Common myeloid progenitor, CD34-positive (primary cell): ENCODE measurements at regions of chr1 and their contacts with region 1.

Region 1: DNA sequence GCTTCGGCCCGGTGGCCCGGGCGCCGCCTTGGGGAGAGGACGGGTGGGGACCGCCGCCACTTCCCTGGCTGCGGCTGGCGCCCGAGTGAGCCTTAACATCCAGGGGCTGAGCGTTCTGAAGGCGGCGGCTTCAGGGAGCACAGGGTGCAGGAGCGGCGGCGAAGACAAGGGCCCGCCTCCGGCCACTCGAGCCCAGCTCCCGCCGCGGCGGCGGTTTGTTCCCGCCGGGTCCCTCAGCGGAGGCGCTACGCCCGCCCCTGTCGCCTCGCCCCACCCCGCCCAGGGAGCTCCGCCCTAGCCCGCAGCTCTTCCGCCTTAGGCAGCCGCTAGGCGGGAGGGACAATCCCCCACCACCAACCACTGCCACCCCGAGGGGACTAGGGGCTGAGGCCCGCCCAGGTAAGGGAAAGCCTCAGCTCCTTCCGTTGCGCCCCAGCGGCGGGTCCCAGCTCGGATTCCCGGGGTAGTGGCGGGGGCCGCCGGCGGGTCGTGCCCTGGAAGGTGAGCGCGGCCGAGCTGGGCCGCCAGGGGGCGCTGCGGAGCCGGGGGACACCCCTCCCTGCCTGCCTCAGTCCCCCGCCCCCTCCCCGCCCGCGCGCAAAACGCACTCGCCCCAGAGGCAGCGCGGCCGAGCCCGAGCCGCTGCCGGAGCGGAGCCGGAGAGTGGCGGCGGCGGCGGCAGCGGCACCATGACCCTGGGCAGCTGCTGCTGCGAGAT is at the start of gene FOXD2:
- DNase-seq: peak; percentile 83 to 91 (median 88)
- H3K4me3 ChIP-seq: peak within 1 kb of the TSS; percentile 40 to 78 (median 70)
- H3K27ac ChIP-seq: peak within 1 kb of the TSS in 1 of 2 experiments; percentile 34
- H3K4me1 ChIP-seq: peaks cover 0 to 49% (median 35%) of the 10 kb centered on the region in 4 experiments
- H3K27me3 ChIP-seq: peaks cover 11 to 91% (median 61%) of the 10 kb centered on the region in 5 experiments

Region 2: GRCh38 chr1:47378147-47378546 is 59.5 kb before region 1 on chr1:
- CTCF ChIA-PET with region 1: no interaction called
- POLR2A ChIA-PET with region 1: no interaction called
- DNase-seq: no peak
- H3K4me3 ChIP-seq: no peak overlapping the region
- H3K27ac ChIP-seq: no peak overlapping the region
- H3K4me1 ChIP-seq: no peaks in the 10 kb centered on the region
- H3K27me3 ChIP-seq: no peaks in the 10 kb centered on the region

Region 3: DNA sequence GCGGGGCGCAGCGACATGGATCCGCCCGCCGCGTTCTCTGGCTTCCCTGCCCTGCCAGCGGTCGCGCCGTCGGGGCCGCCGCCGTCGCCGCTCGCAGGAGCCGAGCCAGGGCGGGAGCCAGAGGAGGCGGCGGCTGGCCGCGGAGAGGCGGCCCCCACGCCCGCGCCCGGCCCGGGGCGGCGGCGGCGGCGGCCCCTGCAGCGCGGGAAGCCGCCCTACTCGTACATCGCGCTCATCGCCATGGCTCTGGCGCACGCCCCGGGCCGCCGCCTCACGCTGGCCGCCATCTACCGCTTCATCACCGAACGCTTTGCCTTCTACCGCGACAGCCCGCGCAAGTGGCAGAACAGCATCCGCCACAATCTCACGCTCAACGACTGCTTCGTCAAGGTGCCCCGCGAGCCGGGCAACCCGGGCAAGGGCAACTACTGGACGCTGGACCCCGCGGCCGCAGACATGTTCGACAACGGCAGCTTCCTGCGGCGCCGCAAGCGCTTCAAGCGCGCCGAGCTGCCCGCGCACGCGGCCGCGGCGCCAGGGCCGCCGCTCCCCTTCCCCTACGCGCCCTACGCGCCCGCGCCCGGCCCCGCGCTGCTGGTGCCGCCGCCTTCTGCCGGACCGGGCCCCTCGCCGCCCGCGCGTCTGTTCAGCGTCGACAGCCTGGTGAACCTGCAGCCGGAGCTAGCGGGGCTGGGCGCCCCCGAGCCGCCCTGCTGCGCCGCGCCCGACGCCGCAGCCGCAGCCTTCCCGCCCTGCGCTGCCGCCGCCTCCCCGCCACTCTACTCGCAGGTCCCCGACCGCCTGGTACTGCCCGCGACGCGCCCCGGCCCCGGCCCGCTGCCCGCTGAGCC is 21.1 kb before region 1 on chr1:
- CTCF ChIA-PET with region 1: interaction called, 53 read pairs
- POLR2A ChIA-PET with region 1: no interaction called
- DNase-seq: peak in 2 of 3 donors; percentile 40 to 55
- H3K4me3 ChIP-seq: peak overlapping the region in 2 of 7 experiments; percentile 54 to 64
- H3K27ac ChIP-seq: no peak overlapping the region
- H3K4me1 ChIP-seq: peaks cover 0 to 5% (median 2%) of the 10 kb centered on the region in 4 experiments
- H3K27me3 ChIP-seq: peaks cover 17 to 79% (median 31%) of the 10 kb centered on the region in 5 experiments

Region 4: GRCh38 chr1:47424336-47424982 is 13.1 kb before region 1 on chr1:
- CTCF ChIA-PET with region 1: interaction called, 53 read pairs
- POLR2A ChIA-PET with region 1: no interaction called
- DNase-seq: no peak
- H3K4me3 ChIP-seq: no peak overlapping the region
- H3K27ac ChIP-seq: no peak overlapping the region
- H3K4me1 ChIP-seq: no peaks in the 10 kb centered on the region
- H3K27me3 ChIP-seq: peaks cover 2 to 37% (median 22%) of the 10 kb centered on the region in 5 experiments

Region 5: GRCh38 chr1:47449822-47450552 is 12.4 kb after region 1 on chr1:
- CTCF ChIA-PET with region 1: interaction called, 63 read pairs
- POLR2A ChIA-PET with region 1: no interaction called
- DNase-seq: no peak
- H3K4me3 ChIP-seq: no peak overlapping the region
- H3K27ac ChIP-seq: no peak overlapping the region
- H3K4me1 ChIP-seq: peaks cover 0 to 7% (median 2%) of the 10 kb centered on the region in 4 experiments
- H3K27me3 ChIP-seq: peaks cover 22 to 87% (median 55%) of the 10 kb centered on the region in 5 experiments

Region 6: DNA sequence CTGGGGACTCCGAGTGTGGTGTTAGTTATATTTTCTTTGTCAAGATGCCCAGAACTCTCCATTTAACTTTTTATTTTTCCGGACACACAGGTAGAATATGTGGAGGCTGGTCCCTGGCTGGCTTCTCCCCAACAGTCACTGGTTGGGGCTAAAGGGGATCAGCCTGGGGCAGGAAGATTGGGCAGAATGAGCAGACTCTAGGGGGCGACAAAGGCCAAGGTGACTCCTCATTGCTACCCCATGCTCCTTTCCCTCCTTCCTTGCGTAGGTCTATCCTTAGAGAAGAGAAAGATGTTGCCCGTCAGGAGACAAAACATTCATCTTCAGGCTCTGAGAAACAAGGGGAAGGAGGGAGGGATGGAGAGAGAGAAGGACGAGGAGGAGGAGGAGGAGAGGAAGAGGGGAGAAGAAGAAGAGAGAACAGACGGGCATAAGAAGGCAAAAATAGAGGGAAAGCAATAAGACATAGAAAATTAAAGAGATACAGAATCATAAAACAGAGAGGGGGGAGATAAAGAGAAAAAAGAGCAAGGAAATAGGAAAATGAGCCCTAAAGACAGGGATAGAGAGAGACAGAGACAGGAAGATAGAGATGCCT is 90.2 kb after region 1 on chr1:
- CTCF ChIA-PET with region 1: interaction called, 10 read pairs
- POLR2A ChIA-PET with region 1: no interaction called
- DNase-seq: peak; percentile 54 to 71 (median 56)
- H3K4me3 ChIP-seq: no peak overlapping the region
- H3K27ac ChIP-seq: no peak overlapping the region
- H3K4me1 ChIP-seq: peaks cover 0 to 26% (median 10%) of the 10 kb centered on the region in 4 experiments
- H3K27me3 ChIP-seq: peaks cover 0 to 15% (median 0%) of the 10 kb centered on the region in 5 experiments

Region 7: GRCh38 chr1:47710329-47711071 is 272.9 kb after region 1 on chr1:
- CTCF ChIA-PET with region 1: interaction called, 129 read pairs
- POLR2A ChIA-PET with region 1: interaction called, 3 read pairs
- DNase-seq: peak; percentile 33 to 61 (median 54)
- H3K4me3 ChIP-seq: peak overlapping the region in 2 of 7 experiments; percentile 59 to 64
- H3K27ac ChIP-seq: no peak overlapping the region
- H3K4me1 ChIP-seq: peaks cover 0 to 27% (median 19%) of the 10 kb centered on the region in 4 experiments
- H3K27me3 ChIP-seq: peaks cover 2 to 97% (median 41%) of the 10 kb centered on the region in 5 experiments

Region 8: DNA sequence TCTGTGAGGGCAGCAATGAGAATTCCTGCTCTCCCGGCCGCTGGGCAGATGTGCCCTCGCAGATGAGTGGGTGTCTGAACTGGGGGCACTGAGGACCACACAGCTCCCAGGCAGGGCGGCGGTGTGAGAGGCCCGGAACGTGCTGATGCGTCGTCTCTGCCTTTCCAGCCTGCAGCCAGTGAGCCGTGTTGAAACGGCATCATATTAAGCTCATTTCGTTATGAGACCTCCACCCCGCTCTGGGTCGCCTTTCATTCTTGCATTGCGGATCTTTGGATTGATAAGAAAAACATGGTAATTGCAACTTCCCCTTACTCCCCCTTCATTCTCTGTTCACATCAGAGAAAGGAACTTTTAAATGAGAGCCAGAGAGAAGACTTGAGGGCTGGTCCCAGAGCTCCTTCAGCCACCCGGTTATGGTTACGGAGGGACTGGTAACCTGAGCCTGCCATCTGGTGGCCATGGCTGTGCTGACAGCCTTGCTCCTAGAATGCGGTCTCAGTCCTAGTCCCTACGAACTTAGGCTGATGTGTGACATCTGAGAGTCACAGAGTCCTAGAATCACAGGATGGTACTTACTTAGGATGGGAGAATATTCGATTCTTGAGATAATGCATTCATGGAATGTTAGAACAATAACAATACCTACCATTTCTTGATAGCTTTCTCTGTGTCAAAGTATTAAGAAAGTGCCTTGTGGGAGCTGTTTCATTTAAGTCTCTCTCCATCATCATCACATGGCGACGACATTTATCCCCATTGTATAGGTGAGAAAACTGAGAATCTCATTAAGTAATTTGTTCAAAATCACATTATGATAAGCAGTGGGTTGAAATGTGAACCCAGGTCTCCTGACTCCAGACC is 288.6 kb after region 1 on chr1:
- CTCF ChIA-PET with region 1: interaction called, 43 read pairs
- POLR2A ChIA-PET with region 1: no interaction called
- DNase-seq: peak; percentile 78 to 86 (median 85)
- H3K4me3 ChIP-seq: peak overlapping the region in 3 of 7 experiments; percentile 22 to 32 (median 28)
- H3K27ac ChIP-seq: no peak overlapping the region
- H3K4me1 ChIP-seq: peaks cover 0 to 26% (median 10%) of the 10 kb centered on the region in 4 experiments
- H3K27me3 ChIP-seq: peaks cover 0 to 35% (median 22%) of the 10 kb centered on the region in 5 experiments